Motor neuron (in vitro differentiated cells): ENCODE measurements at regions of chr2 and their contacts with region 1.

Region 1: DNA sequence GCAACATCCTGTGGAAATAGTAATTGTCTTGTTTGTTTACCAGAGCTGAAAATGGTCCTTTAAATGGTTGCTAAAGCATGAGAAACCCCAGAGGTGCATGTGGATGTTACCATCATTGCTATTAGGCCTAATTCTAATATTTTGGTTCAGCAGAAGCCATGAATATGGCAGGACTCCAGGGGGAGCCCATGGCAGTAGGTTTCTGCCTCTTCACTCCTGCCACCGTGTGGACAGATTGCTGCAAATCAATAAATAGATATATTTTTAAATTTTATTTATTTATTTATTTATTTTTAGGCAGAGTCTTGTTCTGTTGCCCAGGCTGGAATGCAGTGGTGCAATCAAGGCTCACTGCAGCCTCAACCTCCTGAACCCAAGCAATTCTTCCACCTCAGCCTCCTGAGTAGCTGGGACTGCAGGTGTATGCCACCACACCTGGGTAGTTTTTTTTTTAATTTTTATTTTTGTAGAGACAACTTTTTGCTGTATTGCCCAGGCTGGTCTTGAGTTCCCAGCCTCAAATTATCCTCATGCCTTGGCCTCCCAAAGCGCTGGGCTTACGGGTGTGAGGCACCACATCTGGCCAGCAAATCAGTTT is 54.9 kb upstream of the CAPN13 start:
- ATAC-seq: peak in 3 of 8 experiments; percentile 32 to 51 (median 45)
- H3K4me3 ChIP-seq: no peak overlapping the region
- H3K27ac ChIP-seq: no peak overlapping the region
- H3K4me1 ChIP-seq: no peaks in the 10 kb centered on the region

Region 2: DNA sequence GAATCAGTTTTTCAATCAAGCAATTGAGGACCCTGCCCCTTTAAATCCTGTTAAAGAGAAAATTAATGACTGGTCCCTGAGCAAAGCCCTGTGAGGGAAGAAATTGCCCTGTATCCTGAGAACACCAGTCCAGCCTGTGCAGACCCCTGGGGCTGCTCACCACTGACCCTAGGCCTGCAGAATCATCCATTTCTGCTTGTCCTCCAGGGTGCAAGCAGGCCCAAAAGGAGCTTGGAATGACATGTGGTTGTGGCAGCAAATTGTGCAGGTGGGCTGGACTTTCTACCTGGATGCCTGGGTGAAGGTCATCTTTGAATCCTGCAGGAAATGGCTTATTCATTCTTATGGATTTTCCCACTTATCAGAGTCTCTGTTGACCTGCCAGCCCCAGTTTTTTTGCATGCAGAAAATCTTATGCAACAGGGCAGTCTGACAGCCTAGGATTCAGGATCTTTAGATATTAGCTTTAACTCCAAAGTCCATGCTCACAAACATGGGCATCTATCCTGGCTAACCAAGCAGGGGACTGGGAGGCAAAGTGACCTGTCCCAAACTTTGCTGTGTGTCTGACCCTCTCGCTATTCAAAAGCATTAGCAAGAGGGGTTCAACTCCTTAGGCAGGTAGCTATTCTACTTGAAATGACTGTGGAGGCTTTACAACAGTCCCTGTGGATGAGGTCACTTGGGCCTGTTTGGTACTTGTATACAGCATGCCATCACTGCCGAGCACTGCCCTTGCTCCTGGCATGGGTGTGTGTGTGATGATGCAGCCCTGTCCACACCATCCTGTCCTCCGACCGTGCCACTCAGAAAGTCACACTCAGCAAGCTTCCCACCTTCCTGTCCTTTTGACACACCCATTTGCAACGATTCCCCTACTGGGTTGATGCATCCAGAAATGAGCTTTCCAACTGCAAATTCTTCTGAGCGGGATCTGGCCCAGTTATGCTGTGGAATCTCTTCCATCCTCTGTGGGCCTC is 140.2 kb before region 1 on chr2:
- in situ Hi-C with region 1: loop called in 1 of 9 experiments (anchors 10 kb)
- ATAC-seq: peak in 1 of 8 experiments; percentile 38
- H3K4me3 ChIP-seq: no peak overlapping the region
- H3K27ac ChIP-seq: no peak overlapping the region
- H3K4me1 ChIP-seq: peaks cover 0 to 12% of the 10 kb centered on the region in 2 donors

Region 3: GRCh38 chr2:31170071-31170698 is 308.0 kb after region 1 on chr2:
- in situ Hi-C with region 1: loop called in 1 of 9 experiments (anchors 25 kb)
- ATAC-seq: peak; percentile 76 to 98 (median 88)
- H3K4me3 ChIP-seq: no peak overlapping the region
- H3K27ac ChIP-seq: no peak overlapping the region
- H3K4me1 ChIP-seq: peaks cover 0 to 3% of the 10 kb centered on the region in 2 donors

Region 4: GRCh38 chr2:31287654-31288053 is 425.5 kb after region 1 on chr2:
- in situ Hi-C with region 1: no loop called
- ATAC-seq: peak in 3 of 8 experiments; percentile 54 to 80 (median 79)
- H3K4me3 ChIP-seq: no peak overlapping the region
- H3K27ac ChIP-seq: no peak overlapping the region
- H3K4me1 ChIP-seq: no peaks in the 10 kb centered on the region